Activated naive CD4-positive, alpha-beta T cell treated with anti-CD3 and anti-CD28 coated beads for 36 hours (primary cell): ENCODE measurements at regions of chr21 and their contacts with region 1.

Region 1: DNA sequence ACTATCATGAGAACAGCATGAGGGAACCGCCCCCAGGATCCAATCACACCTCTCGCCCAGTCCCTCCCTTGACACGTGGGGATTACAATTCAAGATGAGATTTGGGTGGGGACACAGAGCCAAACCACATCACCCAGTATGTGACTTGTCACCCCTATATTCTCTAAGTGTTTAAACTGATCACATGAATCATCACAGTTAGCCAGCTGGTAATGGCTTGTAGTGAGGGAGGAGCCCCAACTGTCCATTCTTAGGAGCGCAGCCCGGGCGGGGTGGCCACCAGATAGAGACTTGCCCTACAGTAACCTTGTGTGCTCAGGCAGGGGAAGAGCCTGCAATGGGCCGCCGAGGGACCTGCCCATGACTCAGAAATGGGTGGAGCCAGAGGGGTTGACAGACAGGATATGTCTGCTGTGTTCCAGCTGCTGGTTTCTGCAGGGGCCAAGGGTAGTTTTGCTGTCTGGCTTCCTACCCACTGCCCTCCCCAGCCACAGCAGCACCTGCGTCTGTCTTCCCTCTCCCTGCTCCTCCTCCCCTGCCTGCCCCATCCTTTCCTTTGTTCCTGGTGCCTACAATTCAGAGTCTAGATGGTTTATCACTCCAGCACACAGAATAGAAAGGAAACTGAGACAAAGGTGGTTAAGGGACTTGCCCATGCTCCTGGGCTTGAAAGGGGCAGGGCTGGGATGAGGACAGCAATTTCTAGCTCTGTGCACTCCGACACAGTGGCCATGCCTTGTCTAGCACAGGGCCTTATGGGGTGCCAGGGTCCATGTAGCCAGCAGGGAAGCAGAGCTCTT is 9.2 kb downstream of the ABCG1 start:
- DNase-seq: peak; percentile 98
- H3K4me3 Mint-ChIP-seq: peak overlapping the region; percentile 54
- H3K27ac Mint-ChIP-seq: peak overlapping the region; percentile 89
- H3K4me1 Mint-ChIP-seq: peaks cover 78% of the 10 kb centered on the region
- H3K27me3 Mint-ChIP-seq: no peaks in the 10 kb centered on the region

Region 2: DNA sequence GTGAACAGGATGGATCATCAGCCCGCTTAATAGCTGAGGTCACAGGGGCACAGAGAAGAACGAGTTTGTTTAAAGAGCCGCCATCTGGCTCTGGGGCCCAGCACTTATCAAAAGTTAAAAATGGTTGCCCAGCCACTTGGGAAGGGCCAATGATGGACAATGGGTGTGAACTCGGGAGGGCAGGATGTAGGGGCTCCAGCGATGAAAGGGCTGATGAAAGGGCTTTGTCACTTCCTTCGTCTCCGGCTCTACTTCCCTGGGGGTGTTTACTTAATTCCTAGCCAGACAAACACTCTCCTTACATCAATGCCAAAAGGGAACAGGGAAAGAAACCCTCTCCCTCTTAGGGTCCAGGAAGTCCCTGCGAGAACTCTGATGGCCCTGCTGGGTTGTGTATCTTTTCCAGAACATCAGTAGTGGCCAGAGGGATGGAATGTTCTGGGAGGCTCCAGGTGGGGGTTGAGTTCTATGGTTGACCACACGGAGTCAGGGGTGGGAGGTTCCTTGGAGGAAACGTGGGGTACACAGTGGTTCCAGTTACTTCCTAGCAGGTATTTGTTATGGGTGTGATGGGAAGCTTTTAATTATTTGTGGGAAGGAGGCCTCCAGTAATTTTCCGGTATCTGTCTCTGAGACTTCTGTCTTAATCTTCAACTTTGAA is 18.2 kb before region 1 on chr21:
- CTCF ChIA-PET with region 1: no interaction called
- intact Hi-C with region 1: no loop called
- DNase-seq: no peak
- H3K4me3 Mint-ChIP-seq: no peak overlapping the region
- H3K27ac Mint-ChIP-seq: no peak overlapping the region
- H3K4me1 Mint-ChIP-seq: peaks cover 2% of the 10 kb centered on the region
- H3K27me3 Mint-ChIP-seq: no peaks in the 10 kb centered on the region

Region 3: DNA sequence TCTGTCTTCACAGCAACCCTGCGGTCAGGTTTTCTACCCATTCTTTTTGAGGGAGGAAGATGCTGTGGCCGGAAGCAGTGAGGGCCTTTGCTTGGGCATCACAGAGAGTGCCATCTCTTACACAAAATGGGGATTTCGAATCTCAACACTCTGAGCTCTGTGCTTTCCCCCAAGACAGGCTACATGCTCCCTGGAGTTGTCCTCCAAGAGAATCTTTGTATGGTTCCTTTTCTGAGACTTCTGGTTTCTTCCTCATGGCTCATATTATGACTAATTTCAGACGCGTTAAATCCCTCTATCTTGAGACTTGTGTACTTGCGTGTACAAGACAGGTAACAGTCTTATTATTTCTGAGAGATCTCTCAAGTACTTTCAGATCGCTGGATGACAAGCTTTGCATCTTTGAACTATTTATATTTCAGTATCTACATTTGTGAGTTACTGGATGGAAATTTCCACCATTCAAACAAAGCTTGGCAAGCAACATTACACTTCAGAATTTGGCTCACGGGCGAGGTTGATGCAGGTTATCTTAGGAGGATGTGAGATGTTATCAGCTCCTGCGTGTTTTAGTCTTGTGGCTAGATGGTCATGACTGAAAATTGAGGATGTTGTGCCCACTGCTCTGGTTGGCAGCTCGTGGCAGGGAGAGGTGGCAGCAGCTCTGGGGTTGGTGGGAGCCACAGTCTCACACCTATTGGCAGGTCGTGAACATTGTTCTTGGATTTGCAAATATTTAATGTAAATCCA is 10.3 kb after region 1 on chr21:
- CTCF ChIA-PET with region 1: interaction called, 9 read pairs
- intact Hi-C with region 1: loop called (anchors 1 kb)
- DNase-seq: peak; percentile 66
- H3K4me3 Mint-ChIP-seq: peak overlapping the region; percentile 13
- H3K27ac Mint-ChIP-seq: peak overlapping the region; percentile 95
- H3K4me1 Mint-ChIP-seq: peaks cover 53% of the 10 kb centered on the region
- H3K27me3 Mint-ChIP-seq: no peaks in the 10 kb centered on the region